Activated naive CD4-positive, alpha-beta T cell treated with anti-CD3 and anti-CD28 coated beads for 36 hours (primary cell): ENCODE measurements at regions of chr7 and their contacts with region 1.

Region 1: GRCh38 chr7:117385340-117386109 is 41.8 kb downstream of the ASZ1 start:
- DNase-seq: no peak
- H3K4me3 Mint-ChIP-seq: no peak overlapping the region
- H3K27ac Mint-ChIP-seq: no peak overlapping the region
- H3K4me1 Mint-ChIP-seq: no peaks in the 10 kb centered on the region
- H3K27me3 Mint-ChIP-seq: no peaks in the 10 kb centered on the region

Region 2: GRCh38 chr7:116929914-116930913 is 455.3 kb before region 1 on chr7:
- CTCF ChIA-PET with region 1: no interaction called
- intact Hi-C with region 1: loop called (anchors 5 kb)
- DNase-seq: peak; percentile 85
- H3K4me3 Mint-ChIP-seq: no peak overlapping the region
- H3K27ac Mint-ChIP-seq: no peak overlapping the region
- H3K4me1 Mint-ChIP-seq: peaks cover 3% of the 10 kb centered on the region
- H3K27me3 Mint-ChIP-seq: no peaks in the 10 kb centered on the region

Region 3: DNA sequence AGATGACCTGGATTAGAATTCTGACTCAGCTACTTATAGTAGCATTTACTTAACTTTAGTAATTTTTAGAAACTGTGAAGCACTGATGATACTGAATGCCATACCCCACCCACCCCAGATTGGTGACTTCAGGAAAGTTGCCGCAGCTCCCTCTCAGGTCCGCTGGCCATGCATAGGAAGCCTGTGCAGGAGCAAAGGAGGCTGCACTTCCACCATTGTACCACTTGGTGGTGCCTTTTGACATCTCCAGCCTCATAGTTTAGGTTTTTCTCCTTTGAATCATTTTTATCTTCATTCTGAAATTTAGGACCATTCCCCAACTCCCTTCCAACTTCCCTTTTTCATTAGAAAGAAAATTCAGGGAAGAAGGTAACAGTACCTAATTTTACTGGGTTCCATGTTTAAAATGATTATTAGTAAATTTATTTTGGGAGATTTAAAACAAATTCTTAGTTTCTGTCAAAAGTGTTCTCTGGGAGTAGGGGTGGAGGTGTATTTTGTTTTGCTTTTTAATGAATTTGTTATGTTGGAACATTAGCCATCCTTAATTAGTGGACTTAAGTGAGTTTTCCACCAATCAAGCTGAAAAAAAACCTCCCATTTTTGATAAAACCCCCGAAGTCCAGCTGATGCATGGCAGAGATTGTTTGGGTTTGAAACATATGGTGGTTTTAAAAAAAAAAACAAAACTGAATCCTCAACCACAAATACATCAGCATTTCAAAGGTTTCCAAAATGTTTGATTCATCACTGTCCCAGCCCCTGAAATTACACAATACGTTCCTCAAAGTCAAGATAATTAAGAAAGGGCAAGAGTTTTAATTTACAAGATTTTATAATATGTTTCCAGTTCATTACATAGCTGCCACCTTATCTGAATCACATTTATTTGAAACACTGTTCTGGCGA is 172.3 kb before region 1 on chr7:
- CTCF ChIA-PET with region 1: interaction called, 4 read pairs
- intact Hi-C with region 1: loop called (anchors 1 kb)
- DNase-seq: peak; percentile 66
- H3K4me3 Mint-ChIP-seq: no peak overlapping the region
- H3K27ac Mint-ChIP-seq: no peak overlapping the region
- H3K4me1 Mint-ChIP-seq: no peaks in the 10 kb centered on the region
- H3K27me3 Mint-ChIP-seq: no peaks in the 10 kb centered on the region